Activated naive CD4-positive, alpha-beta T cell treated with anti-CD3 and anti-CD28 coated beads for 36 hours (primary cell): ENCODE measurements at regions of chr3 and their contacts with region 1.

Region 1: GRCh38 chr3:123028233-123028828 is 768 bp upstream of the SEMA5B start:
- DNase-seq: peak; percentile 36
- H3K4me3 Mint-ChIP-seq: peak overlapping the region; percentile 55
- H3K27ac Mint-ChIP-seq: no peak overlapping the region
- H3K4me1 Mint-ChIP-seq: peaks cover 11% of the 10 kb centered on the region
- H3K27me3 Mint-ChIP-seq: peaks cover 55% of the 10 kb centered on the region

Region 2: DNA sequence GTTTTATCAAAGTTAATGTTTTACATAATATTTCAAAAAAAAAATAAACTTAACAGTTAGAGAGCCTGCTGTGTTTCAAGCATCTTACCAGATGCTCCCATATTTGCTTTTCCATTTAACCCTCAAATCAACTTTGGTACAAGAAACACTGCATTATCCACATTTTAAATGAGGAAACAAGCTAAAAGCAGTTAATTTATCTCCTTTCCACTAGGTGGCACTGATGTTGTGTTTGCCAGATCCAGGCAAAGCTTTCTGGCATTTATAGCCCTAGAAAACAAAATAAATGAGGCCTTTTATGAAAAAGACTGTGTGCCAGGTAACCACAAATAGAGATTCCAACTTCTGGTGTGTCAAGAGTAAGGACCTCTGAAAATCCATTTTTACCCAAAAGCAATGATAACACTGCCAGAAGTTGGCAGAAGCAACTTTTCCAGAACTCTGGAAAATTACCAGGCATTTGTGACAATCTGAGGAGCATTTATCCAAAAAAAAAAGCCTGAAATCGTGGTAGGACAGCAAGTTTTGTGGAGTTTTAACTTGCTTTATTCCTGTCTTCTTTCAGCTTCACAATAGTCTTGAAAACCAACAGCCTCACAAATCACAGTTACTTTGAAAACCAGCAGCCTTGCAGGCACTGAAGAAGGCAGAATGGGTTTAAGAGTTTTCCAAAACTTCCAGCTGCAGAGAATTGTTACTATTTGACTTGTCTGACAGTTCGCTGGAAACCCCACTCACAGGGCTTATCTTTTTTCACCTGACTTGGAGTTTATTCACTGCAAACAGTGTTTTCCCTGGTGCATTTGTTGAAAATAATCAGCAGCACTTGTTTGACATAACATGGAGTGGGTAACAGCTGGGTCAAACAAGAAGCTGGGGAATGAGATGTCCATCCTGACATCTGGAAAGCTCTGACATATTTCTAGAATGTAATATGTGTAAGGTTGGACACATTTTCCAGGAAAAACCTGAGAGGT is 635.2 kb before region 1 on chr3:
- CTCF ChIA-PET with region 1: no interaction called
- intact Hi-C with region 1: loop called (anchors 1 kb)
- DNase-seq: peak; percentile 34
- H3K4me3 Mint-ChIP-seq: no peak overlapping the region
- H3K27ac Mint-ChIP-seq: no peak overlapping the region
- H3K4me1 Mint-ChIP-seq: peaks cover 41% of the 10 kb centered on the region
- H3K27me3 Mint-ChIP-seq: no peaks in the 10 kb centered on the region

Region 3: DNA sequence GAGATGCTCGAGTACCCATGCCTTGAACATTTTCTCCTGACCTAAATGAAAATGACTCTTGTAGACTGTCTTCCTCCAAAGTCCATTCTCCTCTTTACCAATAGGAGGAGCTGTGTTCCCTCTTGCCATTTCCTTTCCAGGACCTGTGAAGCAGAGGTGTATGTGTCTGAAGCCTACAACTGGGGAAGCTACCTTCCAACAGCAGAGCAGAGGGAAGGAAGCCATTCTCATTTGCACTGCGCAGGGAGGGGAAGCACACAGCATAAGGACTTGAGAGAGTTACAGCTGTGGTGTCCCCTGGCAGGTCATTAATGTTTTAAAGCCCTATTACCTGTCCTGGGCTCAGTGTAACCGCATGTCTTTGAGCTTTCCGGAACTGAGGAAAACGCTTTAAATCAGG is 273.4 kb before region 1 on chr3:
- CTCF ChIA-PET with region 1: interaction called, 8 read pairs
- intact Hi-C with region 1: loop called (anchors 1 kb)
- DNase-seq: peak; percentile 26
- H3K4me3 Mint-ChIP-seq: no peak overlapping the region
- H3K27ac Mint-ChIP-seq: no peak overlapping the region
- H3K4me1 Mint-ChIP-seq: no peaks in the 10 kb centered on the region
- H3K27me3 Mint-ChIP-seq: no peaks in the 10 kb centered on the region

Region 4: DNA sequence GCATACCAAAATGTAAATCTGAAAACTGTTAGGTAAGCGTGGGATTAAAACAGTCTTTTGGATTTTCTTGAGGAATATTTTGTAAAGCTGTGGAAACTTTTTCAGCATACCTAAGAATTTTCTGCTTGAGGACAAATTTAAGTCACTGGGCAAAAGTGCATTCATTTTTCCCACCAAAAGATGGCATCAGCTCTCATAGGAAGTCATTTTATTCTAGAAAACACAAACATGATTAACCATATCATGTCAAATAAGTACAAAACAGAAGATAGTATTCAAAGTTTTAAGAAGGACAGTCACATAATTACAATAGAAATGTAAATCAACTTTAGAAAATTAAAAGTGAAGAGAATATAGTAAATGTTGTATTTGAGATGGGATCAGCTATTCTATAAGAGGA is 170.0 kb before region 1 on chr3:
- CTCF ChIA-PET with region 1: interaction called, 3 read pairs
- intact Hi-C with region 1: loop called (anchors 2 kb)
- DNase-seq: no peak
- H3K4me3 Mint-ChIP-seq: no peak overlapping the region
- H3K27ac Mint-ChIP-seq: no peak overlapping the region
- H3K4me1 Mint-ChIP-seq: peaks cover 8% of the 10 kb centered on the region
- H3K27me3 Mint-ChIP-seq: no peaks in the 10 kb centered on the region

Region 5: DNA sequence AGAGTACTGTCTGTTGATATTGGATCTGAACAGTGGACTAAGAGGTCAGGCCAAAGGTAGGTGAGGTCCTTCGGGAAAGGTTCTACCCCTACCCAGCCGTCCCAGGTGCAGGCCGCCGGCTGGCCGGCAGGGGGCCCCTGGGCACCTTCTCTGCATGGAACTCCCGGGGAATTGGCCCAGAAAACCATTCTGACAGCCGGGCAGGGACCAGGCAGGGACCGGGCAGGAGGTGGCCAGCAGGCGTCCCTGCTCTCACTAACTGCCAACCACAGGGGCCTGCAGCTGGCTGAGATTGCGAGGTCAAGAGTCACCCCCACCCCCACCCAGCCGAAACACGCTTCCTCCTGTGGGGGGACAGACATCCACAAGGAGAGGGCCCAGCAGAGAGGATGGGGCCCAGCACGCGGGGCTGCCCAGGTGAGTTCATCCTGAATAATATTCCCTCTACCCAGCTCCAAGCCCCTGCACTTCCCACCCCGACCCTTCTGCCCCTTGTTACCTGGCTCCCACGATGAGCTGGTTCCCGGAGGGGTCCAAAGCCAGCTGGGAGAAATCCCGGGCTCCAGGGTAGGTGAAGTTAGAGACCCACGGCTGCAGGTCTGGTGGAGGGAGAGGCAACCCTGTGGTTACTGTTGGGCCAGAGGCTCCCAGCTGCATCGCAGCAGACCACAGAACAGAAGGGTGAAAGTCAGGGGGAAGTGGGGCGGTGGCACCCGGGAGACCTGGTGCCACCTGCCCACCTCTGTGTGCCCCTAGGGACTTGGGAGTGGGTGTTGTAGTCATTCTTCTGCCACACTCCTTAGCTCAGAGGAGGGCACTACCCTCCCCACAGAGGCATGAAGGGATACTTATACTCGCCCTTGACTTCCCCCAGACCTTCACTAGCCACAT is 85.1 kb before region 1 on chr3:
- CTCF ChIA-PET with region 1: interaction called, 27 read pairs
- intact Hi-C with region 1: loop called (anchors 1 kb)
- DNase-seq: peak; percentile 49
- H3K4me3 Mint-ChIP-seq: no peak overlapping the region
- H3K27ac Mint-ChIP-seq: no peak overlapping the region
- H3K4me1 Mint-ChIP-seq: no peaks in the 10 kb centered on the region
- H3K27me3 Mint-ChIP-seq: no peaks in the 10 kb centered on the region

Region 6: DNA sequence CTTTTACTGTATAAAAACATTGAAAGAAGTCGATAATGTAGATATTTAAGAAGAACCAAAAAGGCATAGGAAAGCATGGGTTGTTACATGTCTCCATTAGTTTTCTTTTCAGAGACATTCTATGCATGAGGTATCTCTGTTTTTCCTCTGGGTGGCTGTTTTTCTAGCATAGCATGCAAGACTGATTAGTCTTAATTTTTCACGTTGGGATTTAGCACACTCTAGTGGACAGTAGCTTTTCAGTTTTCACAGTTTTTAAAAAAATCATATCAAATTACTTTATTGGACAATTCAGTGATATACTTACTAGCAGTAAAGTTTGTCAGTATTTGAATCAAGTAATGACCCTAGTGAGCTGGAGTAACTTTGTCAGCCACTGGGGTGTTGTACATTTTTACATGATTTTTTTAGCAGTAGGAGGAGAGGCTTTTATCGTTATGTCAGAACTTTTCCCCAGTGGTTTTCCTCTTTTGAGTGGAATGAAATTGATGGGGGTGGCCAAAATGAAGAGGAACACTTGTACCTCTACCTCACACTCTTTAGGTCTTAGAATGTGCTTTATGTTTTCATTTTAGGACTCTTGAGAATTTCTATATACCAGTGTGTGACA is 230.6 kb after region 1 on chr3:
- CTCF ChIA-PET with region 1: no interaction called
- intact Hi-C with region 1: loop called (anchors 2 kb)
- DNase-seq: no peak
- H3K4me3 Mint-ChIP-seq: no peak overlapping the region
- H3K27ac Mint-ChIP-seq: no peak overlapping the region
- H3K4me1 Mint-ChIP-seq: no peaks in the 10 kb centered on the region
- H3K27me3 Mint-ChIP-seq: no peaks in the 10 kb centered on the region